ENCODE measurements at regions of chr7 and their contacts with region 1.

Region 1: GRCh38 chr7:7681179-7681935 is 37.0 kb downstream of the RPA3 start:
- DNase-seq: no peak
- H3K4me3 ChIP-seq: peak overlapping the region in 1 of 2 donors; percentile 25
- H3K27ac ChIP-seq: peak overlapping the region; percentile 2 to 5
- H3K4me1 ChIP-seq: peaks cover 0 to 5% of the 10 kb centered on the region in 2 donors
- H3K27me3 ChIP-seq: no peaks in the 10 kb centered on the region
- CTCF ChIP-seq: peak; percentile 45 to 72 (median 55)

Region 2: GRCh38 chr7:7505915-7506314 is 175.4 kb before region 1 on chr7:
- intact Hi-C with region 1: no loop called
- DNase-seq: no peak
- H3K4me3 ChIP-seq: no peak overlapping the region
- H3K27ac ChIP-seq: no peak overlapping the region
- H3K4me1 ChIP-seq: no peaks in the 10 kb centered on the region
- H3K27me3 ChIP-seq: no peaks in the 10 kb centered on the region
- CTCF ChIP-seq: no peak

Region 3: DNA sequence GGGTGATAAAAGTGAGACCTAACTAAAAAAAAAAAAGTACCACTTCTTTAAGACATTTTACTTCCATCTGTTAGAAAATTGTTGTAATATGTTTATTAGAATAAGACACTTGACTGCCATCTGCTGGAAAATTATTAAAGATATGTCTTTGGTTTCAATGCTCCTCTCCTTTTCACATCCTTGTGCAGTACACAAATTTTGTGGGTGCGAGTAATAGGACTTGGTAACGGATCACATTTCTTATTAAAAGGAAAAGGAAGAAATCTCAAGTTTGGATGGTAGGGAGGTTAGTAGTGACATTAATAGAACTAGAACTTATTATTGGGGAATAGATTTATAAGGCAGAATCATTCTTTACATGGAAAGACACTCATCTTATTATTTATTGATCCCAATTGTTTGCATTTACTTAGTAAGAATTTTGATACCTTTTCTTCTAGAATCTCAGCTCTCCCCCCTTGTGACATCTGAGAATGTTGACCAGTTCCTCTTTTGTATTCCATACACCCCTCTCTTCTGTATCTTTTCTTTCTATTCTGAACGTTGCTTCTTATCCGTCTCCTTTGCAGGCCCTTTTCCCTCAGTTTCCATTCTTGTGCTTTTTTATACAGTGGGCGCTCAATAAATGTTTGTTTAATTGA is 80.1 kb after region 1 on chr7:
- intact Hi-C with region 1: loop called (anchors 2 kb)
- DNase-seq: no peak
- H3K4me3 ChIP-seq: peak overlapping the region; percentile 52 to 58
- H3K27ac ChIP-seq: peak overlapping the region; percentile 43 to 44
- H3K4me1 ChIP-seq: no peaks in the 10 kb centered on the region
- H3K27me3 ChIP-seq: no peaks in the 10 kb centered on the region
- CTCF ChIP-seq: peak; percentile 15 to 43 (median 21)

Region 4: DNA sequence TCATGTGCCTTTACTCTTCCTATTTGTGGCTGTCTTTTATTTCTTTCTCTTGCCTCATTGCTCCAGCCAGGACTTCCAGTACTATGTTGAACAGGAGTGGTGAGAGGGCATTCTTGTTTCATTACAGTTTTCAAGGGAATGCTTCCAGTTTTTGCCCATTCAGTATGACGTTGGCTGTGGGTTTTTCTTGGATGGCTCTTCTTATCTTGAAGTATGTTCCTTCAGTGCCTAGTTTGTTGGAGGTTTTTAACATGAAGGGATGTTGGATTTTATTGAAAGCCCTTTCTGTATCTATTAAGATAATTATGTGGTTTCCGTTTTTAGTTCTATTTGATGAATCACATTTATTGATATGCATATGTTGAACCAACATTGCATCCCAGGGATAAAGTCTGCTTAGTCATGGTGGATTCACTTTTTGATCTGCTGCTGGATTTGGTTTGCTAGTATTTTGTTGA is 384.0 kb after region 1 on chr7:
- intact Hi-C with region 1: loop called (anchors 10 kb)
- DNase-seq: peak in 1 of 2 donors; percentile 64
- H3K4me3 ChIP-seq: peak overlapping the region in 1 of 2 donors; percentile 43
- H3K27ac ChIP-seq: peak overlapping the region; percentile 84 to 90
- H3K4me1 ChIP-seq: peaks cover 5 to 17% of the 10 kb centered on the region in 2 donors
- H3K27me3 ChIP-seq: no peaks in the 10 kb centered on the region
- CTCF ChIP-seq: no peak